Activated CD8-positive, alpha-beta T cell treated with anti-CD3 and anti-CD28 coated beads for 36 hours (primary cell): ENCODE measurements at regions of chr14 and their contacts with region 1.

Region 1: DNA sequence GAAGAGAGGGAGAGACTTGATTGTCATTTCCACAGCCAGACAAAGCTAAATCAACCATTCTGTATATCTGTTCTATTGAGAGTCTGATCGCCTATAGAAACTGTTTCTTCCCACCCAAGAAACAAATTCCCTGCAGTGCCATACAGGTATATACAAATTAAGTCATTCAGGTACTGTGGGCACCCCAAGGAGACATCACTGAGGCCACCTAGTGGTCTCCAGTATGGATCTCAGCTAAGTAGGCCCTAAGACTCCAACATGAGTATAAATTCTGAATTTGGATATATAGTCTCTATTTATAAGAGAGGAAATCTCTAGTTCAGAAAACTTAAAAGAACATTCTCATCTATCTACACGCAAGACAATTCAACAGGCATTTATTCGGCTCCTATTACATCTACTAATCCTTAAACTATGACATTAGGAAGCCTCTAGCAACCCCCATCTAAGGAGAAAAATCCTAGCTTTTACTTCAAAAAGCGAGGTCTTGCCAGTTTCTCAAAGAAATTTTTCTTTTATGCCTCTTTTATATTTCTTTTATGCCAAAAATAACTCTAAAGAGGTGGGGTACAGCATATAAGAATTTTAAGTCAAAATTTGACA is 62.6 kb downstream of the DCAF5 start:
- DNase-seq: peak; percentile 51
- ATAC-seq: peak; percentile 74
- H3K4me3 Mint-ChIP-seq: no peak overlapping the region
- H3K27ac Mint-ChIP-seq: no peak overlapping the region
- H3K4me1 Mint-ChIP-seq: peaks cover 24% of the 10 kb centered on the region
- H3K27me3 Mint-ChIP-seq: no peaks in the 10 kb centered on the region
- CTCF ChIP-seq: peak; percentile 78

Region 2: DNA sequence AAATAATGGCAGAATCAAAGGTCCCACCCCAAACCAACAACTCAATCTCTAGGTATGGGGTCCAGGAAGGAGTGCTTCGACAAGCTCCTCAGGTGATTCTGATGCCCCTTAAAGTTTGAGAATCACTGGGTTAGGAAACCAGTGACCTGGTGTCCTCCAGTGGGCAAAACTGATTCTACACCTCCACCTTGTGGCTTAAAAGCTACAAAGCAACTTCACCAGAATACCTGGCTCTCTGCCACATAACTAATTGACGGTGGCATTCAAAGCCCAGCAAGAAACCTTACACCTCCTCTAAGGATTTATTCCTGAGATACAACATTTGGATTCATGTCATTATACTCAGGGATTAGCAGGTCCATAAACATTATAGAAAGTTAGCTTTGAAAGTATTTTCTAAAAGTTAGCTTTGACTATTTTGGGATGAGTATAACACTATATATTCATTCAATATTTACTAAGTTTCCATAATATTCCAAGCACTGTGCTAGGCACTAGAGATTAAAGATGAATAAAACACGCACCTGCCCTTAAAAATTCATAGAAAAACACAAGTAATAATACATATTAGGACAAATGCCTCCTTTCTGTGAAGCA is 17.2 kb after region 1 on chr14:
- CTCF ChIA-PET with region 1: interaction called, 23 read pairs
- POLR2A ChIA-PET with region 1: no interaction called
- intact Hi-C with region 1: no loop called
- DNase-seq: peak; percentile 46
- ATAC-seq: peak; percentile 75
- H3K4me3 Mint-ChIP-seq: no peak overlapping the region
- H3K27ac Mint-ChIP-seq: peak overlapping the region; percentile 19
- H3K4me1 Mint-ChIP-seq: peaks cover 5% of the 10 kb centered on the region
- H3K27me3 Mint-ChIP-seq: no peaks in the 10 kb centered on the region
- CTCF ChIP-seq: peak; percentile 67